Heart left ventricle (tissue), 16 donors: ENCODE measurements at regions of chr18 and their contacts with region 1.

Region 1: GRCh38 chr18:9055185-9055584 is 47.3 kb upstream of the NDUFV2 start:
- DNase-seq: no peak
- ATAC-seq: peak in 2 of 4 donors; percentile 46 to 58
- H3K4me3 ChIP-seq: no peak overlapping the region
- H3K27ac ChIP-seq: no peak overlapping the region
- H3K4me1 ChIP-seq: peaks cover 0 to 12% (median 0%) of the 10 kb centered on the region in 12 donors
- H3K27me3 ChIP-seq: no peaks in the 10 kb centered on the region
- CTCF ChIP-seq: peak in 8 of 12 donors; percentile 16 to 54 (median 40)
- POLR2A ChIP-seq: no peak

Region 2: GRCh38 chr18:8654503-8655451 is 400.4 kb before region 1 on chr18:
- intact Hi-C with region 1: loop called in 5 of 10 experiments (anchors 10 kb)
- DNase-seq: no peak
- ATAC-seq: no peak
- H3K4me3 ChIP-seq: no peak overlapping the region
- H3K27ac ChIP-seq: no peak overlapping the region
- H3K4me1 ChIP-seq: peaks cover 0 to 6% (median 0%) of the 10 kb centered on the region in 12 donors
- H3K27me3 ChIP-seq: peaks cover 0 to 8% (median 0%) of the 10 kb centered on the region in 9 donors
- CTCF ChIP-seq: peak; percentile 69 to 89 (median 78)
- POLR2A ChIP-seq: no peak

Region 3: GRCh38 chr18:8696749-8697211 is 358.4 kb before region 1 on chr18:
- intact Hi-C with region 1: loop called in 4 of 10 experiments (anchors 2 to 10 kb)
- DNase-seq: peak; percentile 51 to 81 (median 68)
- ATAC-seq: peak in 3 of 4 donors; percentile 85 to 92 (median 91)
- H3K4me3 ChIP-seq: no peak overlapping the region
- H3K27ac ChIP-seq: no peak overlapping the region
- H3K4me1 ChIP-seq: no peaks in the 10 kb centered on the region
- H3K27me3 ChIP-seq: peaks cover 0 to 10% (median 0%) of the 10 kb centered on the region in 9 donors
- CTCF ChIP-seq: peak; percentile 88 to 98 (median 92)
- POLR2A ChIP-seq: no peak

Region 4: GRCh38 chr18:9102508-9103375 is 47.6 kb after region 1 on chr18 and contains the start of gene NDUFV2:
- intact Hi-C with region 1: no loop called
- DNase-seq: peak; percentile 98 to 99 (median 98)
- ATAC-seq: peak; percentile 98 to 99 (median 99)
- H3K4me3 ChIP-seq: peak within 1 kb of the TSS; percentile 27 to 89 (median 78)
- H3K27ac ChIP-seq: peak within 1 kb of the TSS; percentile 89 to 99 (median 95)
- H3K4me1 ChIP-seq: peaks cover 11 to 52% (median 48%) of the 10 kb centered on the region in 12 donors
- H3K27me3 ChIP-seq: no peaks in the 10 kb centered on the region
- CTCF ChIP-seq: peak in 1 of 12 donors; percentile 24
- POLR2A ChIP-seq: peak in 1 of 2 donors; percentile 88
- total RNA-seq, gene NDUFV2: 236 to 469 (median 407) TPM

Region 5: GRCh38 chr18:9130806-9131205 is 75.6 kb after region 1 on chr18:
- intact Hi-C with region 1: no loop called
- DNase-seq: no peak
- ATAC-seq: no peak
- H3K4me3 ChIP-seq: no peak overlapping the region
- H3K27ac ChIP-seq: peak overlapping the region in 1 of 12 donors; percentile 23
- H3K4me1 ChIP-seq: peaks cover 0 to 44% (median 23%) of the 10 kb centered on the region in 12 donors
- H3K27me3 ChIP-seq: no peaks in the 10 kb centered on the region
- CTCF ChIP-seq: no peak
- POLR2A ChIP-seq: no peak

Region 6: DNA sequence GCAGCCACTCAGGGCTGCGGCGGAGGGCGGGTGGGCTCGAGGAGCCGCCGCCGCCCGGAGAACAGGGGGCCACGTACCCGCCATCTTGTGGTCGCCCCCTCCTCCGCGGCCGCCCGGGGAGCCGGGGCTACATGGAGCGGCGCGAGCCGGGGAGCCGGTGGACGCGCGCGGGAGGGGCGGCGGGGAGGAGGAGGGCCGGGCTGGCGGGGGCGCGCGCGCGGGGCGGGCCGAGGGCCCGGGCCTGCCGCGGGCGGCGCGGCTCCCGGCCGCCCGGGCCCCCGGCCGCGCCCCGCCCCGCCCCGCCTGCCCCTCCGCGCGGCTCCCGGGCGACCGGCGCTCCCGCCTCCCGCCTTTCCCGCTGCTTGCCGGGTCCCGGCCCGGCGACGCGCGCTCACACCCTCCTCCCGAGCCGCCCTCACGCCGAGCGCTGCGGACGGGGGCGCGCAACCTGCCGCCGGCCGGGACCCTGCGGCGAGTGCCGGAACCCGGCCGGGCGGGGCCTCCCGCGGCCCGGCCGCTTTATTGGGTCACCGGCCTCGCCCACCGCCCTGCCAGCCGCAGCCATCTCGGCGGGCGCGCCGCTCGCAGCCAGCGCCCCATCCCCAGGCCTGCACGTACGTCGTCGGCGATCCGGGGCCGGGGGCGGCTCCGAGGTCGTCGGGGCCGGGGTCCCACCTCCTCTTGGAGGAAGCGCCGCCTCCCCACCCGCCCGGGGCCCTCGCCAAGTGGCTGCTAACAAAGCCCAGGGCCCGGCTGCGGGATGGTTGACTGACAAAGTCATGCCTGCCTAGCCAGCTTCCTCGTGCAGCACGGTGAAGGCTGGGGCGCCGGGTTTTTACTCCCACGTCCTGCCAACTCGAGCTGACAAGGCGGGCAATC is 559.5 kb after region 1 on chr18 and contains the start of gene PPP4R1:
- intact Hi-C with region 1: no loop called
- DNase-seq: peak; percentile 83 to 90 (median 88)
- ATAC-seq: peak; percentile 44 to 86 (median 78)
- H3K4me3 ChIP-seq: peak within 1 kb of the TSS; percentile 74 to 99 (median 85)
- H3K27ac ChIP-seq: peak within 1 kb of the TSS; percentile 92 to 99 (median 97)
- H3K4me1 ChIP-seq: peaks cover 0 to 43% (median 25%) of the 10 kb centered on the region in 12 donors
- H3K27me3 ChIP-seq: no peaks in the 10 kb centered on the region
- CTCF ChIP-seq: no peak
- POLR2A ChIP-seq: peak in 1 of 2 donors; percentile 29
- total RNA-seq, gene PPP4R1: 39.1 to 81.3 (median 63.8) TPM